H1 (cell line): ENCODE measurements at regions of chr1 and their contacts with region 1.

Region 1: DNA sequence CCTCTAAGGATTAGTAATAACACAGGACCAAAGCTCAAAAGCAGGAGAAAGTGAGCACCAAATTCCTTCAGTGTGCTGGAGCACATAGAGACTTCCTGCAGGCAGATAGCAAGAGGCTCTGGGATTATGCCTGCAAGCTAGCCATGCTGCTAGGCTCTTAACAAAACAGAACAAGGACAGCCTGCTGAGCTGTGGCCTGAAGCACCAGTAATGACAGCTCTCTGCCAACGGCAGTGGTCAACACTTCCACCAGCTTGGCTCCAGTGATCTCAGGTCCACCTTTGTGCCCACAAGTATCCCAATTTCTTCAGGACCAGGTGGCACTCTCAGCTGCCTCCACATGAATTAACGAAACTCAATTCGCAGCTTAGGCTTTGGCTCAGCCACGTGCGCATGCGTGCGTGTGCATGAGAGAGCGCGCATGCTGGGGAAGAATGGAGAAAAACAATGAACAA is 64.2 kb downstream of the SLC45A1 start:
- DNase-seq: no peak
- H3K4me3 ChIP-seq: no peak overlapping the region
- H3K27ac ChIP-seq: no peak overlapping the region
- H3K4me1 ChIP-seq: peaks cover 0 to 21% (median 13%) of the 10 kb centered on the region in 4 experiments; a peak in 5 of 7 replicates
- H3K27me3 ChIP-seq: no peaks in the 10 kb centered on the region
- CTCF ChIP-seq: no peak
- EP300 ChIP-seq: no peak
- POLR2A ChIP-seq: no peak
- RAD21 ChIP-seq: no peak

Region 2: DNA sequence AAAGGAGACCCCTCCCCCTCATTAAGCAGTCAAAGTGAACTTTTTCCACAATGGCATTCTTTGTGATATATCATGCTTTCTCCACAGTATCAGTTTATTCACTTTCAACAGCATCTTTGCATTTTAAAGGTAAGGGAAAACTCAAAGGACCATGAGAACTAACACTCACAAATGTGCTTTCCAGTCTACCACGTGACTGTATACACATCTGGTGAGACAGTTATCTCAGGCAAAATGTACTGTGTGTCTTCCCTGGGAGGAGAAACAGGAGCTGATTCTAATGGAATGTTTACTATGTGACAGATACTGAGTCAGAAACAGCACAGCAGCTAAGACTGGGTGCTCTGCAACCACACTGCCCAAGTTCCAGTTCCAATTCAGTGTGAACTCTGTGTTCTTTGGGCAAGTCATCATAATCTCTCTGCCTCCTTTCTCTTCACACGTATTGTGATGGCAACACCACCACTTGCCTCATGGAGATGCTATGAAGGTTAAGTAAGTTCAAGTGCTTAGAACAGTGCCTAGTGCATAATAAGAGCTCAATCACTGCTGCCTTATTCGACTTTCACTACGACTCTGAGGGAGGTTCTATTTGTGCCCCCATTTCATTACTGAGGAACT is 14.8 kb after region 1 on chr1:
- CTCF ChIA-PET with region 1: interaction called, 11 read pairs
- POLR2A ChIA-PET with region 1: interaction called, 4 read pairs
- DNase-seq: no peak
- H3K4me3 ChIP-seq: no peak overlapping the region
- H3K27ac ChIP-seq: no peak overlapping the region
- H3K4me1 ChIP-seq: peaks cover 9 to 27% (median 20%) of the 10 kb centered on the region in 4 experiments
- H3K27me3 ChIP-seq: no peaks in the 10 kb centered on the region
- CTCF ChIP-seq: no peak
- EP300 ChIP-seq: no peak
- POLR2A ChIP-seq: no peak
- RAD21 ChIP-seq: no peak